ENCODE measurements at regions of chr5 and their contacts with region 1.

Region 1: GRCh38 chr5:151315998-151316597 is 12.5 kb upstream of the SLC36A3 start:
- DNase-seq: peak; percentile 83
- ATAC-seq: peak; percentile 69

Region 2: GRCh38 chr5:151126199-151126645 is 189.9 kb before region 1 on chr5:
- intact Hi-C with region 1: loop called (anchors 10 kb)
- DNase-seq: peak; percentile 93
- ATAC-seq: peak; percentile 60

Measured in Right ventricle myocardium inferior (tissue), 1 donor.